Breast epithelium (tissue), 4 donors: ENCODE measurements at regions of chr2 and their contacts with region 1.

Region 1: DNA sequence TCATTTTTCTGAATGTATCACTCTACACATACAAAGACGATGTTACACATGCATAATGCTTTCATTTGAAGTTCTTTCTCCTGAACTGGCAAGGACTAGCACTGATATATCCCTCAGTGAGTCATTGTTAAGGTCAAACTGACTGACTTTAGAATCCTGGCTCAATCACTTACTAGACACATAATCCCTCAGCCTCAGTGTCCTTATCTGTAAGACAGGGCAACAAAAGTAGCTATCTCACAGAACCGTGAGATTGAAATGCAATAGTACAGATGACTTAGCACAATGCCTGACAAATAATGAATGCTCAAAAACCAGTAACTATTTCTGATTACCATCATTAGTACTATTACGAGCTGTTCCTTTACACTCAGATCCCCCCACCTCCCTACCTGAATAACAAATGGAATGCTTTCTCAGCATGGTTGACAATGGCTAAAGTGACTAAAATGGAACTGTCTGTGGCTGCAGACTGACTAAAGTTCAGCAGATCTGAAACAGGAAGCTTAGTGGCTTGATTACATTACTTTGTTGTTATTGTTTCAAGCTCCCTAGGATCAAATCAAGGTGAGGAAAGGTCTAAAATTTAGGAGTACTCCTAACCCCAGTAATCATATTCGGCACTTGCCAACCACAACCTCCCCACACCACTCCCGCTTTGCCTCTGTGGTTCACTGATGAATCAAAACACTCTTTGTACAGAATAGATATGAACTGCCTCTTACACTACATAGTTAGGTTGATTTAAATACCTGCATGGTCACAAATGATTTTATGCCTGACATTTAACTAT is 35.8 kb upstream of the CACNB4 start:
- DNase-seq: no peak
- H3K4me3 ChIP-seq: no peak overlapping the region
- H3K27ac ChIP-seq: peak overlapping the region in 1 of 2 donors; percentile 14
- H3K4me1 ChIP-seq: no peaks in the 10 kb centered on the region
- H3K27me3 ChIP-seq: no peaks in the 10 kb centered on the region
- CTCF ChIP-seq: no peak
- POLR2A ChIP-seq: no peak

Region 2: GRCh38 chr2:152183401-152184073 is 48.9 kb after region 1 on chr2:
- intact Hi-C with region 1: loop called (anchors 2 kb)
- DNase-seq: no peak
- H3K4me3 ChIP-seq: no peak overlapping the region
- H3K27ac ChIP-seq: no peak overlapping the region
- H3K4me1 ChIP-seq: no peaks in the 10 kb centered on the region
- H3K27me3 ChIP-seq: no peaks in the 10 kb centered on the region
- CTCF ChIP-seq: no peak
- POLR2A ChIP-seq: no peak